ENCODE measurements at regions of chr15 and their contacts with region 1.

Region 1: DNA sequence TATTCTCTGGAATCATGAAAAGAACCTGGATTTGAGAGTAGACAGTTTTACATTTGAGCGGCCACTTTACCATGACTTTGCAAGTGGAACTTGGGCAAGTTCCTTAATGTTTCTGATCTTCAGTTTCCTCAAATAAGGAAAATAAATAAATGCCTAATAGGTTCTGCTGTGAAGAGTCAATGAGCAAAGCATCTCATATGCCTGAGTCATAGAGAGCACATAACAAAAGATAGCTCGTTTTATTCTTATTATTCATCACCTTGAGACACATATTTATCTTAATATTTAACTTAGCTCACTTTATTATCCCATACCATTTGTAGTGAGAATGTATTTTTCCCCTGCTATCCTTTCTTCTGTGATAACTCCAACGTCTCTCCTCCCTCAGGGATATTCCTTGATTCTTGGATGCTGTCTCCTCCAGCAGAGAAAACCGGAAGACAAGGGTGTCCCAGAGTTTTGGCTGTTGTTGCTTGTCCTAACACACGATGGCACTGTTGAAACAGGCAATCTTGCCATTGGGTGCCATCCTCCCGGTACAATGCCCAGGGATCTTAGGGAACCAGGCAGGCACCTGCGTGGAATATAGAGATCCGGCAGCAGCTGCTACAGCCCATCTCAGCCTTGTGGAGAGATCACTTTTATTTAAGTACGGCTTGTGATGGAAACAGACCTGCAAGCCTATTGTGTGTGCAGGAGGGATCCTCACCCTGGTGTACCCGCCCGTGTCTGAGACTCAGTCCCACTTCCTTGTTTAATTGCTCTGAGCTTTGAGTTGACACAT is 33.3 kb upstream of the VPS33B start:
- DNase-seq: no peak

Region 2: DNA sequence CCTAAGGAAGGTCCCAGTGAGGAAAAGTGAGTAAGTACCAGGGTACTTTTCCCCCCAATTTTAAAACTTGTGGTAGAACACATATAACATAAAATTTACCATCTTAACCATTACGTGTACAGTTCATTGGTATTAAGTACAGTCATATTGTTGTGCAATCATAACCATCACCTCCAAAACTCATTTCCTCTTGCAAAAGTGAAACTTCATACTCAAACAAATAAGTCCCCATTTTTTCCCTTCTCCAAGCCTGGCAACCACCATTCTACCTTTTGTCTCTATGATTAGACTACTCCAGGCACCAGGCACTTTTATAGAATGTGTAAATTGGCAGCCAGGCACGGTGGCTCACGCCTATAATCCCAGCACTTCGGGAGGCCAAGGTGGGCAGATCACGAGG is 73.6 kb before region 1 on chr15:
- intact Hi-C with region 1: no loop called
- DNase-seq: no peak

Region 3: DNA sequence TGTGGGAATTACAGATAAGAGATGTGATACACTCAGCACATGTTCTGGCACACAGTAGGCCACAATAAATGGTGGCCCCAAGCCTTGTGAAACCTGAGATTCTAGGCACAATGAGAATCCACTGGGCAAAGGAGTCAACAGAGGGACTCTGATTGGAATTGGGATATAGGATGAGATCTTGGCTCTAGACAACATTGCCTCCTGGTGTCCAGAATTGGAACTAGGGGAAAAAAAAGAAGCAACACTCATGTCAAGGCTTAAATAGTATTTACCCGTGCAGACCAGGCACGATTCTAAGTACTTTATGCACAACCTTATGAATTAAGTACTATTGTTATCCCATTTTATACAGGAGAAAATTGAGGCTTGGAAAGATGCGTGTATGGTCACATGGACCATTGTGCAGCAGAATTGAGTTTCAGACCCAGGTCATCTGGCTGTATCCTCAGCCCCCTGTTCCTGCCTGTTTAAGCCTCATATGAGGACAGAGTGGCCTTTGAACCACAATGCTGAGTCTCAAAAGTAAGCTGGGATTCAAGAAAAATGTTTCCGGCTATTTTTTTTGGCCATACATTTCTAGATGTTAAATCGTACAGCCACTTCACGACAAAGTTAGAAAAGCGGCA is 169.1 kb after region 1 on chr15:
- intact Hi-C with region 1: loop called (anchors 1 kb)
- DNase-seq: no peak

Region 4: GRCh38 chr15:91271565-91272153 is 215.9 kb after region 1 on chr15:
- intact Hi-C with region 1: loop called (anchors 2 kb)
- DNase-seq: no peak

Measured in cardiac septum (tissue), 1 donor.